ENCODE measurements at regions of chr11 and their contacts with region 1.

Region 1: GRCh38 chr11:113781679-113782078 is 2.1 kb downstream of the CLDN25 start:
- DNase-seq: no peak
- H3K4me3 ChIP-seq: no peak overlapping the region
- H3K4me3 Mint-ChIP-seq: no peak overlapping the region
- H3K27ac ChIP-seq: no peak overlapping the region
- H3K27ac Mint-ChIP-seq: no peak overlapping the region
- H3K4me1 ChIP-seq: no peaks in the 10 kb centered on the region
- H3K4me1 Mint-ChIP-seq: no peaks in the 10 kb centered on the region
- H3K27me3 ChIP-seq: no peaks in the 10 kb centered on the region
- H3K27me3 Mint-ChIP-seq: peaks cover 12 to 23% of the 10 kb centered on the region in 2 donors

Region 2: DNA sequence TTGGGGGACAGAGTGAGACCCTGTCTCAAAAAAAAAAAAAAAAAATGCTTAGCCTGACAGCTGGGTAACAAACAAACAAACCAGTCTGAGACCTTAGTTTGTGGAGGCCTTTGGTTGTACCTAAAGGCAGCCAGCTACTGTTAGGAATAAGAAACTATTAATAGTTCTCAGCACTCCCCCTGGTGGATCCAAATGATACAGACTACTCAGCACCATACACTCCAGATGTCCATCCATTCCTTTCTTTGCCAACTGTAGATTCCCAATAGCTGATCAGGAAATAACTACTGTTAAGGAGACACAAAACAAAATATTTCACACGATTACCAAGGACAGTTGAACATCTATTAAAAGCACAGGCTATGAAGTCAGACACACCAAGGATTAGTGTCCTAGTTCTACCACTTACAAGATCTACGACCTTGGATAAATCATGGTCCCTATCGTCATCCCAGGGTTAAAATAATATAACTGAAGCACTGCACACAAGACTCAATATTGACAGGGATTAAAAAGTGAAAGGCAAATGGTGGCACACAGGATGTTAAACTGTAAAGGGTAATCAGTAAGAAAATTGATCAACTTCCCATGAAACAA is 15.1 kb after region 1 on chr11:
- CTCF ChIA-PET with region 1: interaction called, 15 read pairs
- POLR2A ChIA-PET with region 1: no interaction called
- intact Hi-C with region 1: no loop called
- DNase-seq: peak in 4 of 5 donors; percentile 12 to 20 (median 15)
- H3K4me3 ChIP-seq: no peak overlapping the region
- H3K4me3 Mint-ChIP-seq: no peak overlapping the region
- H3K27ac ChIP-seq: no peak overlapping the region
- H3K27ac Mint-ChIP-seq: peak overlapping the region in 1 of 7 donors; percentile 31
- H3K4me1 ChIP-seq: no peaks in the 10 kb centered on the region
- H3K4me1 Mint-ChIP-seq: no peaks in the 10 kb centered on the region
- H3K27me3 ChIP-seq: no peaks in the 10 kb centered on the region
- H3K27me3 Mint-ChIP-seq: no peaks in the 10 kb centered on the region

Region 3: GRCh38 chr11:113835306-113835705 is 53.6 kb after region 1 on chr11:
- CTCF ChIA-PET with region 1: no interaction called
- POLR2A ChIA-PET with region 1: no interaction called
- intact Hi-C with region 1: no loop called
- DNase-seq: no peak
- H3K4me3 ChIP-seq: no peak overlapping the region
- H3K4me3 Mint-ChIP-seq: no peak overlapping the region
- H3K27ac ChIP-seq: no peak overlapping the region
- H3K27ac Mint-ChIP-seq: peak overlapping the region in 1 of 7 donors; percentile 79
- H3K4me1 ChIP-seq: no peaks in the 10 kb centered on the region
- H3K4me1 Mint-ChIP-seq: no peaks in the 10 kb centered on the region
- H3K27me3 ChIP-seq: no peaks in the 10 kb centered on the region
- H3K27me3 Mint-ChIP-seq: no peaks in the 10 kb centered on the region

Measured in CD4-positive, alpha-beta memory T cell (primary cell).